Heart left ventricle (tissue), 16 donors: ENCODE measurements at regions of chr2 and their contacts with region 1.

Region 1: GRCh38 chr2:19667085-19667484 is 234.7 kb downstream of the TTC32 start:
- DNase-seq: no peak
- ATAC-seq: peak in 1 of 4 donors; percentile 29
- H3K4me3 ChIP-seq: no peak overlapping the region
- H3K27ac ChIP-seq: no peak overlapping the region
- H3K4me1 ChIP-seq: peaks cover 0 to 16% (median 0%) of the 10 kb centered on the region in 12 donors
- H3K27me3 ChIP-seq: no peaks in the 10 kb centered on the region
- CTCF ChIP-seq: peak in 5 of 12 donors; percentile 11 to 35 (median 27)
- POLR2A ChIP-seq: no peak

Region 2: DNA sequence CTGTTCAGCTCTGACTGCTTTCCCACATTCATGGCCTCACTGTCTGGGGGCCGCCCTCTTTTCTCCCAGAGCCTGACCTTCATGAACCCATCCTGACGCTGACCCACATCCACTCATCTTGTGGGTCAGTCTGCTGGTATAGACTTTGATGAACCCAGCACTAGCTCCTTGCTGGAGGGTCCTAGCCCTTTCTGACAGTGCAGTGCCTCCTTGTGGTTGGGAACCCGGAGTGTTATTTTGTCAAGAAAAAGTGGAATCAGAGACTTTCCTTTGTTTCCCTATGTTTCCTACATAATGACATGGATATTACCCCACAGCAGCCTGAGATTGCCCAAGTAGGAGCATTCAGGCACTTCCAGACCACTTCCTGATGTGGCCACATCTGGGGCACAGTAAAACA is 289.4 kb before region 1 on chr2:
- intact Hi-C with region 1: loop called in 1 of 10 experiments (anchors 10 kb)
- DNase-seq: no peak
- ATAC-seq: no peak
- H3K4me3 ChIP-seq: no peak overlapping the region
- H3K27ac ChIP-seq: no peak overlapping the region
- H3K4me1 ChIP-seq: no peaks in the 10 kb centered on the region
- H3K27me3 ChIP-seq: peaks cover 0 to 4% (median 0%) of the 10 kb centered on the region in 9 donors
- CTCF ChIP-seq: no peak
- POLR2A ChIP-seq: no peak

Region 3: GRCh38 chr2:19702267-19702666 is 35.2 kb after region 1 on chr2:
- intact Hi-C with region 1: no loop called
- DNase-seq: no peak
- ATAC-seq: peak in 1 of 4 donors; percentile 33
- H3K4me3 ChIP-seq: no peak overlapping the region
- H3K27ac ChIP-seq: no peak overlapping the region
- H3K4me1 ChIP-seq: no peaks in the 10 kb centered on the region
- H3K27me3 ChIP-seq: no peaks in the 10 kb centered on the region
- CTCF ChIP-seq: no peak
- POLR2A ChIP-seq: no peak